ENCODE measurements at regions of chr15 and their contacts with region 1.

Region 1: DNA sequence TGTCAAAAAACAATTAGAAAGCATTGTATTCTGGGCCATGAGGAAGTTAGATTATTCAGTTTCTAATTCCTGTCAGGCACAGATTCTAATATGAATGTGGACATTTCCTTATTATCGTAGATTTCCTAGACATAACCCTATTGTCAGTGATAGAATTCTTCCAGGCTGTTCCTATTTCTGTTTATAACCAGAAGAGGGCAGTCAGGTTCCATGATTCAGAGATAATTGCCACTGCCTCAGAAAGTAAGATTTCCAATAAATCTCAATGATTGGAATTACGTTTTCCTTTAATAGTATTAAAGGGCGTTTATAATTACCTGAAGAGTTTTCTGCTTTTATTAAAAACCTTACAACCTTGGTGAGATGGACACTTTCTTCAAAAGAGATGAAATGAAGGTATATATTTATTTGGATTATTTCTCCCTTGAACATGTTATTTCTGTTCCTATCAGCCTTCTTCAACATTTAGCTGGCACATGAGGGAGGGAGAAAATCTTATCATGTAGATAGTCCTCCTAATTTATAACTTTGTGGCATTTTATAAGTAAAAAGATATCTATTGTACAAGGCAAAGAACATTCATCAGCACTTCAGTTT is 439.2 kb downstream of the MCTP2 start:
- DNase-seq: no peak
- H3K4me3 ChIP-seq: no peak overlapping the region
- H3K27ac ChIP-seq: no peak overlapping the region
- H3K4me1 ChIP-seq: peaks cover 0 to 7% (median 5%) of the 10 kb centered on the region in 4 experiments; a peak in 4 of 7 replicates
- H3K27me3 ChIP-seq: no peaks in the 10 kb centered on the region
- CTCF ChIP-seq: peak in 2 of 3 experiments; percentile 48 to 64; a peak in 2 of 4 replicates
- EP300 ChIP-seq: no peak
- POLR2A ChIP-seq: no peak
- RAD21 ChIP-seq: peak; percentile 87 to 90

Region 2: GRCh38 chr15:94582369-94582768 is 88.2 kb before region 1 on chr15:
- CTCF ChIA-PET with region 1: interaction called, 22 read pairs
- POLR2A ChIA-PET with region 1: no interaction called
- DNase-seq: peak; percentile 31 to 59
- H3K4me3 ChIP-seq: no peak overlapping the region
- H3K27ac ChIP-seq: no peak overlapping the region
- H3K4me1 ChIP-seq: peaks cover 0 to 2% (median 0%) of the 10 kb centered on the region in 4 experiments; a peak in 1 of 7 replicates
- H3K27me3 ChIP-seq: no peaks in the 10 kb centered on the region
- CTCF ChIP-seq: peak; percentile 67 to 82 (median 80)
- EP300 ChIP-seq: no peak
- POLR2A ChIP-seq: no peak
- RAD21 ChIP-seq: peak; percentile 93 to 95

Region 3: DNA sequence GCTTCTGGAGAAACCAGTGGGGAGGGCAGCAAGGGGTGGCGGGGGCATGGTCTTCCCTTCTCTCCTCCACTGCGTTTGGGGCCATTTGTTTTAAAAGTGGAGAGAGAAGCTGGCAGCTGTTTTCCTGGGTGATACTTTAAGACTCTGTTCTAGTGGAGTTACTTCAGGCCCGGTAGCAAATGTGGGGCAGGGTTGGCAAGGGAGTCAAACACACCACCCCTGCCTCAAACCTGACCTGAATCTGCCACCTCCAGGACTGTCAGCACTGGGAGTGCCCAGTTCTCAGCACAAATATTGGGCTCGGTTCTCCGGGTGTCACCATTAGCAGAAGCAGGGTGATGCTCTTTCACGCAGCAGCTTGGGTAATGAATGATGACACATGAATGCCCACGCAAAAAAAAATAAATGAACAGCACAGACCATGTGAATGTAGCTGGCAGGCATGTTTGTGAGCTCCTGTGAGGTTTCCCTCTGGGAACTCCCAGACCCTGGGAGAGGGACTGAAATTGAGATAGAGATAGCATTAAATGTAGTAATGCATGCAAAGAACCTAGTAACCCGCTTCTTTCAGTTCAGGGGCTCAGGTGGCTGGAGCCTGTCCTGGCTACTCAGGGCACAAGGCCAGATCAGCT is 15.2 kb before region 1 on chr15:
- CTCF ChIA-PET with region 1: interaction called, 17 read pairs
- POLR2A ChIA-PET with region 1: no interaction called
- DNase-seq: no peak
- H3K4me3 ChIP-seq: no peak overlapping the region
- H3K27ac ChIP-seq: no peak overlapping the region
- H3K4me1 ChIP-seq: no peaks in the 10 kb centered on the region; a peak in 1 of 7 replicates
- H3K27me3 ChIP-seq: peaks cover 0 to 3% (median 0%) of the 10 kb centered on the region in 4 experiments; a peak in 2 of 7 replicates
- CTCF ChIP-seq: no peak
- EP300 ChIP-seq: no peak
- POLR2A ChIP-seq: no peak
- RAD21 ChIP-seq: no peak

Region 4: DNA sequence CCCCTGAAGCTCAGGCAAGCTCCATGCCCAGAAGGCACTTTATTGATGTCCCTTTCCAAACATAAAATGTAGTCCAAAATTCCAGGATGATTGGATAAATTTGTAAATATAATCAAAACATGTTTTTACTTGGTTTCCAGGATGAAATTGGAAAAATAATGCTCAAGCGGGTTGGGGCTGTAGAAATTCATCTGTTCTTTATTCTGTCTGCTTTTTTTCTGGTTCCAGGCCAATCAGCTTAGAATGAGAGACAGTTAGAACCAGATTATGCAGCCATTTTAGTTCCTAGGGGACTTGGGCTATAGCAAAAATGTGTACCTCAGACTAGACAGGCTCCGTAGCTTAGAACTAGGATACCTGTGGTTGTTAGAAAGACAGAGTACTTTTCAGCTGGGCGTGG is 11.6 kb after region 1 on chr15:
- CTCF ChIA-PET with region 1: interaction called, 17 read pairs
- POLR2A ChIA-PET with region 1: no interaction called
- DNase-seq: no peak
- H3K4me3 ChIP-seq: no peak overlapping the region
- H3K27ac ChIP-seq: no peak overlapping the region
- H3K4me1 ChIP-seq: no peaks in the 10 kb centered on the region
- H3K27me3 ChIP-seq: no peaks in the 10 kb centered on the region
- CTCF ChIP-seq: no peak
- EP300 ChIP-seq: no peak
- POLR2A ChIP-seq: no peak
- RAD21 ChIP-seq: no peak

Region 5: DNA sequence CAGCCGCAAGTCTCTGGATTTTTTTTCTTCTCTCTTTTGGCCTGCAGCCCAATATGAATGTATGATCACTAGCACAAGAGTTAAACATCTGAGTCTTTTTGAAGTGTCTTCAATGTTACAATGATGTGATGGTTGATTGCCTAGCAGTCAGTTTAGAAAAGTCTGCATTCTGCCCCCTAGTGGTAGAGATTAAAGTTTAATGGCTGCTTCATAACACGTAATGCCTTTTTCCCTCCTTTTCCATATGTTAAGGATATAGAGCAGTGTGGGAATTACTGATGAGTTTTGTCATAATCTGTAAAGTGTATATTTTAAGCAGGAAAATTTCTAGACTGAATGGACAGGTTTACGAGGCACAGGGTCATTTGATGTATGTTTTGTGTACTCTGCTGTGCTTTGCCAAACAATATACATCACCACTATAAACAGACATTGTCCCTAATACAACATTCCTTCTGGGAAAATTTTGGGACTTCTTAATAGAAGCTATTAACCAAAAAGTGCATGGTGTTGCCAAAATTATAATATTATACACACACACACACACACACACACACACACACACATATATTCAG is 621.4 kb after region 1 on chr15:
- CTCF ChIA-PET with region 1: interaction called, 18 read pairs
- POLR2A ChIA-PET with region 1: no interaction called
- DNase-seq: no peak
- H3K4me3 ChIP-seq: no peak overlapping the region
- H3K27ac ChIP-seq: no peak overlapping the region
- H3K4me1 ChIP-seq: peaks cover 0 to 7% (median 4%) of the 10 kb centered on the region in 4 experiments; a peak in 5 of 7 replicates
- H3K27me3 ChIP-seq: no peaks in the 10 kb centered on the region
- CTCF ChIP-seq: peak in 2 of 3 experiments; percentile 48 to 77; a peak in 3 of 4 replicates
- EP300 ChIP-seq: no peak
- POLR2A ChIP-seq: no peak
- RAD21 ChIP-seq: peak; percentile 40 to 48